Activated naive CD4-positive, alpha-beta T cell treated with anti-CD3 and anti-CD28 coated beads, Interleukin-2, amount 10 ng/mL, durations not matched to agents 7 days and 5 days (primary cell): ENCODE measurements at regions of chr14 and their contacts with region 1.

Region 1: GRCh38 chr14:102316743-102317563 is 2.6 kb upstream of the ZNF839 start:
- DNase-seq: peak; percentile 95
- H3K4me3 Mint-ChIP-seq: peak overlapping the region; percentile 88
- H3K27ac Mint-ChIP-seq: peak overlapping the region; percentile 95
- H3K4me1 Mint-ChIP-seq: peaks cover 76% of the 10 kb centered on the region
- H3K27me3 Mint-ChIP-seq: peaks cover 17% of the 10 kb centered on the region

Region 2: DNA sequence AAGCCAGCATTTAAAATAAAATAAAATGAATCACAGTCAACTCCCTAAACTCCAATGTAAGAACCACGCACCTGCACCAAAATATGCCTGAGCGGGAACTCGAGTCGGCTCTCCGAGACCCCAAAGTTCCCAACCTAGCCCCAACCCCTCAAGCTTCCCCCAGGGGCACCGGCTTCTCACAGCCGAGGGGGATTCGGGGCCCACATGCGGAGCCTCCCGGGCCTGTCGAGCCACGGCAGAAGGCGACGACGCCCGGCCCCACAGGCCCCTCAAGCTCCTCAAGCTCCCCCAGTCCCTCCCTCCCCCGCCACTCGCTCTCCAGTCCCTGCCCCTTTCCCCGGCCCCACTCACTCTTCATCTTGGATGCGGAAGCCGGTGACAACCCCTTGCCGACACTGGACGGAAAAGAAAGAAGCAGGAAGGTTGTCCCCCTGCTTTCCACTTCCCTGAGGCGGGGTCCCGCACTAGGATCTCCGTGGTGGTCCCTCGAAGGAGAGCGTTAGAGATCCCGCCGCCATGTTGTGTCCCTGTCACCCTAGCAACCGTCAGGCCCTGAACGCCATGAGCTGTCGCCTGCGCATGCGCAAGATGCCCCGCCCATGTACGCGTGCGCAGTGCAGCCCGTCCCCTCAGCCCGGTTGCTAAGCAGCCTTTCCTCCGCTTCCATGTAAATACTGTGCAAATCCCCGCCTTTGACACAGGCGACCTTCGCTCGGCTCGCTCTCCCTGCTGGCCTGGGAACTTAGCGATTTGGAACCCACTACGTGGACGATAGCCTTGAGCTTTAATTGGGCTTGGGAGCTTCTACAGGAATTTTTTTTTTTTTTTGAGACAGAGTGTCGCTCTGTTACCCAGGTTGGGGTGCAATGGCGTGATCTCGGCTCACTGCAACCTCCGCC is 12.1 kb before region 1 on chr14 and contains the start of gene MOK:
- CTCF ChIA-PET with region 1: interaction called, 13 read pairs
- DNase-seq: peak; percentile 97
- H3K4me3 Mint-ChIP-seq: peak within 1 kb of the TSS; percentile 84
- H3K27ac Mint-ChIP-seq: peak within 1 kb of the TSS; percentile 86
- H3K4me1 Mint-ChIP-seq: peaks cover 12% of the 10 kb centered on the region
- H3K27me3 Mint-ChIP-seq: peaks cover 14% of the 10 kb centered on the region

Region 3: DNA sequence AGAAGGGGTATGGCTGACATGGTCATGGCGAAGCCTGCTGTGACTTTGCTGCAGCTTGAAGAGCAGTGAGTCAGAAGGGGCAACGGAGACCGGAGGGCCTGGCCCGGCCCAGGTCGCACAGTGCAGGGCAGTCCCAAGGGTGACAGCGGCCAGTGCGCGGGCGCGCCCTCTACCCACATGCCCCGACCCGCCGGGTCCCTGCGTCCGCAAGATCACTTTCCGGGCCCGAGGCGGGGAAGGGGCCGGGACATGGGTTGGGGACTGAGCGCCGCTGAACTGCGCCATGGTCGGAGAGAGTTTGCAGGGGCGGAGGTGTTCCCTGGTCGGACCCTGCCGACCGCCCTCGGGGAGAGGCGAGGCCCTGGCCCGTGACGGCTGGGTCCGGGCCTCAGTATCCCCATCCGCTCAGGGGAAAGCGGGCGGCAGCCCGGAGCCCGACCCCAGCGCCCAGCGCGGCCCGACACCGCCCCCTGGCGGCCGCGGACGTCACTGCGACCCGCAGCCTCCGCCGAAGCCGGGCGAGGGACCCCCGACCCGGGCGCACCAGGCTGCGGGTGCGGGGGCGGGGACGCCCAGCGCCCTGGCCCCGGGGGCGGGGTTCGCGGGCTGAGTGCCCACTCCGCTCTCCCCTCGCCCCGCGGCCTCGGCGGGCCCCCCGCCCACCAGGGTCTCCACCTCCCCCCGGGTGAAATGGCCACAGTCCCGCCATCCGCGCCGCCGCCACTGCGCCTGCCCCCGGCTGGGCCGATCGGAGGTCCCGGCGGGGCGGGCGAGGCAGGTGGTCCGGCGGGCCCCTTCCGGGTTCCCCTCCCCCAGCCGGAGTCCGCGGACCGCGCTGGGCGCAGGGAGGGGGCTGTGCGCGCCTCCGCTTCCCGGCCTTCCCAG is 199.8 kb after region 1 on chr14:
- CTCF ChIA-PET with region 1: interaction called, 24 read pairs
- DNase-seq: peak; percentile 71
- H3K4me3 Mint-ChIP-seq: peak overlapping the region; percentile 64
- H3K27ac Mint-ChIP-seq: peak overlapping the region; percentile 16
- H3K4me1 Mint-ChIP-seq: peaks cover 8% of the 10 kb centered on the region
- H3K27me3 Mint-ChIP-seq: peaks cover 51% of the 10 kb centered on the region

Region 4: GRCh38 chr14:102610968-102611811 is 294.2 kb after region 1 on chr14:
- CTCF ChIA-PET with region 1: no interaction called
- DNase-seq: no peak
- H3K4me3 Mint-ChIP-seq: no peak overlapping the region
- H3K27ac Mint-ChIP-seq: no peak overlapping the region
- H3K4me1 Mint-ChIP-seq: peaks cover 5% of the 10 kb centered on the region
- H3K27me3 Mint-ChIP-seq: no peaks in the 10 kb centered on the region